A549 (cell line): ENCODE measurements at regions of chrX and their contacts with region 1.

Region 1: GRCh38 chrX:104136241-104137019 is 20.4 kb downstream of the SLC25A53 start:
- DNase-seq: peak; percentile 70 to 87
- ATAC-seq: peak; percentile 99
- H3K4me3 ChIP-seq: peak overlapping the region; percentile 50
- H3K27ac ChIP-seq: peak overlapping the region; percentile 59 to 73; a peak in 4 of 6 replicates
- H3K4me1 ChIP-seq: no peaks in the 10 kb centered on the region
- CTCF ChIP-seq: peak; percentile 70
- EP300 ChIP-seq: no peak
- POLR2A ChIP-seq: no peak
- RAD21 ChIP-seq: peak; percentile 62 to 66

Region 2: GRCh38 chrX:104098151-104098808 is 38.1 kb before region 1 on chrX:
- CTCF ChIA-PET with region 1: interaction called, 18 read pairs
- POLR2A ChIA-PET with region 1: no interaction called
- DNase-seq: peak; percentile 15 to 79
- ATAC-seq: peak; percentile 71 to 84; a peak in 5 of 6 replicates
- H3K4me3 ChIP-seq: no peak overlapping the region
- H3K27ac ChIP-seq: no peak overlapping the region
- H3K4me1 ChIP-seq: no peaks in the 10 kb centered on the region
- CTCF ChIP-seq: peak; percentile 67
- EP300 ChIP-seq: no peak
- POLR2A ChIP-seq: no peak
- RAD21 ChIP-seq: peak; percentile 50 to 60

Region 3: DNA sequence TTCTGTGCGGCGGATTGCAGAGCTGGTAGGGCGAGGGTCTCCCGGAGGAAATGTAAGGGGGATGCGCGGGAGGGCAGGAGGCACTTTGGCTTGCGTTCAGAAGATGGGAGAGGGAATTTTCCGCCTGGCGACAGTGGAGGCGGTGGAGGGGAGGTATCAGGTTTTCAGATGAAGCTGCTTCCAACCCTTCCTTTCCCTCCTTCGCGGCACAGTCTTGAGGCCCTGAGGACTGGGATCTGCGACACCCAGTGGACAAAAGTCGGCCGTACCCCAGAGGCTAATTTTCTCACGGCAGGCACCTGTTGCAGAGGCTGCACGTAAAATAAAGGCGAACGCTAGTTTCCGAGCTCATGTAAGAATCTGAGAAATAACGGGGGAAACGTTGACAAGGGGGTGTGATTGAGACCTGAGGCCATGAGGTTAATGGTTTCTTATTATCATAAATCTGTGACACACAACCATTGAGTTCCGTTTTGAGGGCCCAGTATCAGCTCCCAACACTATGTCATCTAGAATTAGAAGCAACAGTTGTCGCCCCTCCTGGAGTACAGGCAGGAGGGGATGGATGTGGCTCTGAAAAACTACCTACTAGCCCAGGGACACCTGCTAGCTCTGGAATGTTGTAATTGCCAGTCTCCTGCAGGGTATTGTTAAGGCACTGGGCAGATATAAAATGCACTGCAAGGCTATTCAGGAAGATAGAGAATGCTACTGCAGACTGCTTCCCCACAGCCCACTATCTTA is 23.0 kb before region 1 on chrX:
- CTCF ChIA-PET with region 1: interaction called, 12 read pairs
- POLR2A ChIA-PET with region 1: no interaction called
- DNase-seq: peak; percentile 29 to 69
- ATAC-seq: peak; percentile 85 to 94
- H3K4me3 ChIP-seq: peak overlapping the region; percentile 60
- H3K27ac ChIP-seq: 0 out of 6 replicates have a peak overlapping the region, but pooled peaks of 1 of the 2 experiments have one; percentile 66
- H3K4me1 ChIP-seq: no peaks in the 10 kb centered on the region
- CTCF ChIP-seq: peak; percentile 49
- EP300 ChIP-seq: no peak
- POLR2A ChIP-seq: no peak
- RAD21 ChIP-seq: peak; percentile 43 to 52; a peak in 3 of 5 replicates

Region 4: DNA sequence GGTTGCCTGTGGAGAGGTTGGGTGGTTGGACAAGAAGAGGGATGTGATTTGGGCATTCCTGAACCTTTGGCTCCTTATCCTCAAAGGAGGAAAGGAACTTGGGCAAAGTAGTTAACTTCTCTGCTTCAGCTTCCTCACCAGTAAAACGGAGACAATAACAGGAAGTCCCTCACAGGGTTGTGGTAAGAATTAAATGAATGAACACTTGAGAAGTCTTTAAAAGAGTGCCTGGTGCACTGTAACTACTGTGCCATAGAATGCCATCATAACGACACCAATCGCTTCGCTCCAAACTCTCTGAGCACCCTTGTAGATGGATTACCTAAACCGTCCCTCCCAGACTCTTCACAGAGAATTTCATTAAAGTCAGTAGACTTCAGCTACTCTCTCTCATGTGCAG is 13.6 kb before region 1 on chrX:
- CTCF ChIA-PET with region 1: interaction called, 10 read pairs
- POLR2A ChIA-PET with region 1: no interaction called
- DNase-seq: no peak
- ATAC-seq: no peak
- H3K4me3 ChIP-seq: no peak overlapping the region
- H3K27ac ChIP-seq: no peak overlapping the region
- H3K4me1 ChIP-seq: no peaks in the 10 kb centered on the region
- CTCF ChIP-seq: no peak
- EP300 ChIP-seq: no peak
- POLR2A ChIP-seq: no peak
- RAD21 ChIP-seq: no peak

Region 5: GRCh38 chrX:104189837-104190236 is 53.4 kb after region 1 on chrX:
- CTCF ChIA-PET with region 1: no interaction called
- POLR2A ChIA-PET with region 1: no interaction called
- DNase-seq: no peak
- ATAC-seq: no peak
- H3K4me3 ChIP-seq: no peak overlapping the region
- H3K27ac ChIP-seq: no peak overlapping the region
- H3K4me1 ChIP-seq: no peaks in the 10 kb centered on the region
- CTCF ChIP-seq: no peak
- EP300 ChIP-seq: no peak
- POLR2A ChIP-seq: no peak
- RAD21 ChIP-seq: no peak